ENCODE measurements at regions of chr2 and their contacts with region 1.

Region 1: GRCh38 chr2:62456721-62457539 is 49.1 kb downstream of the TMEM17 start:
- DNase-seq: no peak
- ATAC-seq: peak; percentile 97
- H3K4me3 ChIP-seq: peak overlapping the region; percentile 64; the same call in 1 of the 2 replicates
- H3K27ac ChIP-seq: no peak overlapping the region
- H3K4me1 ChIP-seq: no peaks in the 10 kb centered on the region
- H3K27me3 ChIP-seq: no peaks in the 10 kb centered on the region
- CTCF ChIP-seq: peak; percentile 87 to 96 (median 88)
- EP300 ChIP-seq: no peak
- POLR2A ChIP-seq: no peak
- RAD21 ChIP-seq: peak; percentile 93

Region 2: DNA sequence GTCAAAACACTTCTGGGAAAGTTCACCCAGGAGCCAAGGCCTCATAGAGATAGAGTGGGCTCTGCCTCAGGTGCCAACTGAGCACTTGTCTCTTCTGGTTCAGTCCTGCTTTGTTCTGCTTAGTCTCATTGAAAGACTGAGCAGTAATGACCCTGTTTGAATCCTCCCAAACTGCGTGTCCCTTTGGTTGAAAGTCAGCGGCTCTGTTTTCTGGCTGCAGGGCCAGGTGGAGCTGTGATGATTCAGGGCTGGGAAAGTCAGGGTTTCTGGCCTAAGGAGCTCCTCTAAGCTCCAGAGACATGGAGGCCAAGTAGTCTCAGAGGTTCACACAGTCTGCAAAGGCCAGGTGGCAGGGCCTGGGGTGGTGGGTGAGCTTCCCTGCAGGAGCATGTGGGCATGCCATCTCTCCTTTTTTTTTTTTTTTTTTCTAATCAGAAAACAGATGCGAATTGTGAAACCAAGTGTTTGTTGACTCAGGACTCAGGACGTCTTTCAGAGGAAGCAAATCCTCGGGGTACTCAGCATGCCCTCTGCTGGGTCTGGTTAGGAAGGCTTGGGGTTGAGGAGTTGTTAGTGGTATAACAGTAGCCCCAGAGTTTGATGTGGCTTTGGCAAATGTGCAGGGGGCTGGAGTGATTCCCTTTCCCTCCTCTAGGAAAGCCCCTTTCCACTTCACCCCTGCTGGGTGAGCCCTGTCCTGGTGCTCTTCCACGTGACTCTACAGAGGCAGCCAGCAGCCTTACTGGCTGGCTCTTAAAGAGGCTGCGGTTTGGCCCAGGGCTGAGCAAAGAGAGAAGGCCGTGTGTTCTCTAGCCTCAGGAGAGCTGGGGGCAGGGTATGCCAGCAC is 10.8 kb after region 1 on chr2:
- CTCF ChIA-PET with region 1: interaction called, 17 read pairs
- POLR2A ChIA-PET with region 1: no interaction called
- RAD21 ChIA-PET with region 1: interaction called, 23 read pairs
- SMC1A ChIA-PET with region 1: interaction called, 14 read pairs
- in situ Hi-C with region 1: no loop called
- intact Hi-C with region 1: no loop called
- DNase-seq: no peak
- ATAC-seq: no peak; the same call in 2 of the 3 replicates
- H3K4me3 ChIP-seq: no peak overlapping the region
- H3K27ac ChIP-seq: no peak overlapping the region; the same call in 1 of the 2 replicates
- H3K4me1 ChIP-seq: peaks cover 4% of the 10 kb centered on the region
- H3K27me3 ChIP-seq: no peaks in the 10 kb centered on the region; a peak in 1 of 4 replicates
- CTCF ChIP-seq: no peak
- EP300 ChIP-seq: no peak
- POLR2A ChIP-seq: no peak
- RAD21 ChIP-seq: no peak

Region 3: GRCh38 chr2:62660582-62661262 is 203.8 kb after region 1 on chr2:
- CTCF ChIA-PET with region 1: interaction called, 12 read pairs
- POLR2A ChIA-PET with region 1: no interaction called
- RAD21 ChIA-PET with region 1: interaction called, 3 read pairs
- SMC1A ChIA-PET with region 1: interaction called, 9 read pairs
- in situ Hi-C with region 1: no loop called
- intact Hi-C with region 1: no loop called
- DNase-seq: no peak
- ATAC-seq: peak; percentile 43
- H3K4me3 ChIP-seq: no peak overlapping the region
- H3K27ac ChIP-seq: peak overlapping the region; percentile 62
- H3K4me1 ChIP-seq: peaks cover 34% of the 10 kb centered on the region
- H3K27me3 ChIP-seq: no peaks in the 10 kb centered on the region
- CTCF ChIP-seq: no peak
- EP300 ChIP-seq: no peak
- POLR2A ChIP-seq: no peak
- RAD21 ChIP-seq: no peak

Region 4: GRCh38 chr2:62768615-62769014 is 311.7 kb after region 1 on chr2:
- CTCF ChIA-PET with region 1: interaction called, 249 read pairs
- POLR2A ChIA-PET with region 1: interaction called, 6 read pairs
- RAD21 ChIA-PET with region 1: interaction called, 183 read pairs
- SMC1A ChIA-PET with region 1: interaction called, 201 read pairs
- in situ Hi-C with region 1: loop called (anchors 5 kb)
- intact Hi-C with region 1: no loop called
- DNase-seq: no peak
- ATAC-seq: no peak
- H3K4me3 ChIP-seq: no peak overlapping the region
- H3K27ac ChIP-seq: no peak overlapping the region
- H3K4me1 ChIP-seq: no peaks in the 10 kb centered on the region
- H3K27me3 ChIP-seq: no peaks in the 10 kb centered on the region
- CTCF ChIP-seq: no peak
- EP300 ChIP-seq: no peak
- POLR2A ChIP-seq: no peak
- RAD21 ChIP-seq: no peak

Region 5: DNA sequence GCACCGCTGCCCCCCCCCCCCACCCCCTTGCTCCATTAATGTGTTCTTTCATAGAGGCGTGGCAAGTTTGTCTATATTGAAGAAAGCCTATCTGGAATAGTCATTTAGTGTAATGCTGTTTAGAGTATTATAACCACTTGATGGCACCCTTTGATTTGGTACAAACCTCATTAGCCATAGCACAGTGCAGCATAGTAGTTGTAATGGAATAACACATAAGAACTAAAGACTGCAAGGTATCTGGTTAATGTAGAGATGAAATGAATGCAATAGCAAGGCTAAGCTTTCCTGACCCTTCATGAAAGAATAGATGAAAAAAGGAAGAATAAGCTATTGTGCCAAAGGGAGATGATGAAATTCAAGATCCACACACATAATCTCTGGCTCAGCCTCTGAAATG is 330.5 kb after region 1 on chr2:
- CTCF ChIA-PET with region 1: interaction called, 24 read pairs
- POLR2A ChIA-PET with region 1: no interaction called
- RAD21 ChIA-PET with region 1: interaction called, 12 read pairs
- SMC1A ChIA-PET with region 1: interaction called, 12 read pairs
- in situ Hi-C with region 1: no loop called
- intact Hi-C with region 1: no loop called
- DNase-seq: no peak
- ATAC-seq: peak; percentile 90
- H3K4me3 ChIP-seq: no peak overlapping the region
- H3K27ac ChIP-seq: no peak overlapping the region
- H3K4me1 ChIP-seq: no peaks in the 10 kb centered on the region
- H3K27me3 ChIP-seq: no peaks in the 10 kb centered on the region
- CTCF ChIP-seq: peak; percentile 39 to 66 (median 45); a peak in 4 of 6 replicates
- EP300 ChIP-seq: no peak
- POLR2A ChIP-seq: no peak
- RAD21 ChIP-seq: peak; percentile 88

Region 6: DNA sequence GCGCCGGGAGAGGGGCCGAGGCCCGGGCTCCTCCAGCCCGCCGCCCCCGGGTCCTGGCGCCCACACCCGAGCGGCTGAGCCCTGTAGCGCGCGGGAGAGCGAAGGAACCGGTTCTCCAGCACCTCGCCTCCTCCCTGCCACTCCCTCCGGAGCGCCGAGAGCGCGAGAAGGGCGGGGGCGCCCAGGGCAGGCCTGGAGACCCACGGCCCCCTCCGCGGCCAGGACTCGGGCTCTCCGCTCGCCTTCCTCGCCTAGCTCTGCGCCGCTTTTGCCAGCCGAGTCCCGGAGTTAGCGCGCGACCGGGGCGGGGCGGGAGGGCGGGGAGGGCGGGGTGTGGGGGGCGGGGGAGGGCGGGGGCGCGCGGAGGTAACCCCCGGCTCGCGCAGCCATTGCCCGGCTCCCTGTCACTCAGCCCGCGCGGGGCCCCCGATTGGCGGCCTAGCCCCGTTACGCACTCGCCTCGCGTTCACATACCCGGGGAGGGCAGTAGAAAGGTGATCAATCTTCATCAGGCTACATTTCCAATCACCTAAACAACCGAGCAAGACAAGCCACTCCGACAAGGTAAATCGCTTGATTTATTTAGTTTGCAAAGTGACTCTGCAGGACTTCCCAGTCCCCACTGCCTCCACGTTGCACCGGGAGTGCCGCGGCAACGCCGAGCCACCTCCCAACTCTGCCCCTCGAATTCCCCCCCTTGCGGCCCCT is 593.6 kb after region 1 on chr2 and contains the start of gene OTX1:
- CTCF ChIA-PET with region 1: interaction called, 4 read pairs
- POLR2A ChIA-PET with region 1: no interaction called
- RAD21 ChIA-PET with region 1: no interaction called
- SMC1A ChIA-PET with region 1: no interaction called
- in situ Hi-C with region 1: no loop called
- intact Hi-C with region 1: loop called (anchors 10 kb)
- DNase-seq: peak; percentile 41
- ATAC-seq: peak; percentile 92
- H3K4me3 ChIP-seq: peak within 1 kb of the TSS; percentile 83
- H3K27ac ChIP-seq: no peak within 1 kb of the TSS
- H3K4me1 ChIP-seq: peaks cover 8% of the 10 kb centered on the region
- H3K27me3 ChIP-seq: peaks cover 0 to 28% of the 10 kb centered on the region in 2 experiments; a peak in 3 of 4 replicates
- CTCF ChIP-seq: no peak
- EP300 ChIP-seq: no peak
- POLR2A ChIP-seq: peak; percentile 78
- RAD21 ChIP-seq: no peak
- polyA plus RNA-seq, gene OTX1: 0.04 TPM in 1 of 2 experiments, not detected in the other

Region 7: DNA sequence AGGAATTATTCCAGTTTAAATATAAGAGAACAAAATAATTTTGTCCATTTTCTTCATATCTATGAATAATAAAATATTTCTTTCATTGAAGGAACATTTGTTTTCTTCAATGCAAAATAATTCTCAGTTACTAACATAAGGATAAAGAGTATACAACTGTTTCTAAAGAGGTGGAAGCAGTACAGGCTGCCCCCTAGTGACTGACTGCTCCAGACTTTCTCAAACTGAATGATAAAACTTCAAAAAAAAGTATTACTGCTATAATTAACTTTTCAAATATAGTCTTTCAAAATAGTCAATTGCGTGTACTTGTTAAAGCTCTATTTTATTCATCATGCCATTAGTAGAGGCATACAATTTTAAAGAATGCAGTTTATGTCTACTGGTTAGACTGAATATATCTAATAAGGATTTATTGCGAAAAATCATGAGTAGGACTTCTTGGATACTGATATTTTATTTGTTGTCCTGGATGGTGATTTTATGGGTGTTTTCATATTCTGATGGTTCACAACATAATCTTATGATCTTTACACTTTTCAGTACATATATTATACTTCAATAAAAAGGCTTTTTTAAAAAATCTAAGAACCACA is 1031.3 kb after region 1 on chr2:
- CTCF ChIA-PET with region 1: interaction called, 9 read pairs
- POLR2A ChIA-PET with region 1: interaction called, 4 read pairs
- RAD21 ChIA-PET with region 1: interaction called, 15 read pairs
- SMC1A ChIA-PET with region 1: interaction called, 4 read pairs
- in situ Hi-C with region 1: loop called (anchors 25 kb)
- intact Hi-C with region 1: loop called (anchors 2 kb)
- DNase-seq: no peak
- ATAC-seq: peak; percentile 66
- H3K4me3 ChIP-seq: no peak overlapping the region
- H3K27ac ChIP-seq: no peak overlapping the region
- H3K4me1 ChIP-seq: no peaks in the 10 kb centered on the region
- H3K27me3 ChIP-seq: no peaks in the 10 kb centered on the region
- CTCF ChIP-seq: peak; percentile 54 to 68 (median 61)
- EP300 ChIP-seq: no peak
- POLR2A ChIP-seq: no peak
- RAD21 ChIP-seq: peak; percentile 64